ENCODE measurements at regions of chr7 and their contacts with region 1.

Region 1: GRCh38 chr7:22255834-22256233 is 101.1 kb downstream of the RAPGEF5 start:
- DNase-seq: no peak
- H3K4me3 ChIP-seq: peak overlapping the region in 6 of 59 donors; percentile 6 to 38 (median 11)
- H3K27ac ChIP-seq: peak overlapping the region in 57 of 59 donors; percentile 7 to 97 (median 79)
- H3K27me3 ChIP-seq: no peaks in the 10 kb centered on the region
- CTCF ChIP-seq: peak in 11 of 56 donors; percentile 10 to 40 (median 21)

Region 2: GRCh38 chr7:21902240-21902639 is 353.6 kb before region 1 on chr7:
- intact Hi-C with region 1: no loop called
- DNase-seq: no peak
- H3K4me3 ChIP-seq: no peak overlapping the region
- H3K27ac ChIP-seq: no peak overlapping the region
- H3K27me3 ChIP-seq: peaks cover 0 to 8% (median 0%) of the 10 kb centered on the region in 45 donors
- CTCF ChIP-seq: no peak

Region 3: GRCh38 chr7:22110227-22110839 is 145.5 kb before region 1 on chr7:
- intact Hi-C with region 1: loop called (anchors 2 to 5 kb)
- DNase-seq: peak; percentile 36 to 92 (median 76)
- H3K4me3 ChIP-seq: peak overlapping the region in 15 of 59 donors; percentile 4 to 56 (median 22)
- H3K27ac ChIP-seq: peak overlapping the region; percentile 35 to 100 (median 99)
- H3K27me3 ChIP-seq: no peaks in the 10 kb centered on the region
- CTCF ChIP-seq: peak; percentile 75 to 99 (median 90)

Region 4: GRCh38 chr7:22219036-22219435 is 36.8 kb before region 1 on chr7:
- intact Hi-C with region 1: loop called (anchors 1 to 2 kb)
- DNase-seq: peak in 8 of 10 donors; percentile 56 to 88 (median 66)
- H3K4me3 ChIP-seq: peak overlapping the region in 58 of 59 donors; percentile 5 to 72 (median 46)
- H3K27ac ChIP-seq: peak overlapping the region; percentile 52 to 99 (median 93)
- H3K27me3 ChIP-seq: no peaks in the 10 kb centered on the region
- CTCF ChIP-seq: peak in 1 of 56 donors; percentile 18